GM13977 (cell line): ENCODE measurements at regions of chr3 and their contacts with region 1.

Region 1: GRCh38 chr3:179015551-179016020 is 56.0 kb downstream of the ZMAT3 start:
- DNase-seq: peak; percentile 54
- CTCF ChIP-seq: peak; percentile 62

Region 2: DNA sequence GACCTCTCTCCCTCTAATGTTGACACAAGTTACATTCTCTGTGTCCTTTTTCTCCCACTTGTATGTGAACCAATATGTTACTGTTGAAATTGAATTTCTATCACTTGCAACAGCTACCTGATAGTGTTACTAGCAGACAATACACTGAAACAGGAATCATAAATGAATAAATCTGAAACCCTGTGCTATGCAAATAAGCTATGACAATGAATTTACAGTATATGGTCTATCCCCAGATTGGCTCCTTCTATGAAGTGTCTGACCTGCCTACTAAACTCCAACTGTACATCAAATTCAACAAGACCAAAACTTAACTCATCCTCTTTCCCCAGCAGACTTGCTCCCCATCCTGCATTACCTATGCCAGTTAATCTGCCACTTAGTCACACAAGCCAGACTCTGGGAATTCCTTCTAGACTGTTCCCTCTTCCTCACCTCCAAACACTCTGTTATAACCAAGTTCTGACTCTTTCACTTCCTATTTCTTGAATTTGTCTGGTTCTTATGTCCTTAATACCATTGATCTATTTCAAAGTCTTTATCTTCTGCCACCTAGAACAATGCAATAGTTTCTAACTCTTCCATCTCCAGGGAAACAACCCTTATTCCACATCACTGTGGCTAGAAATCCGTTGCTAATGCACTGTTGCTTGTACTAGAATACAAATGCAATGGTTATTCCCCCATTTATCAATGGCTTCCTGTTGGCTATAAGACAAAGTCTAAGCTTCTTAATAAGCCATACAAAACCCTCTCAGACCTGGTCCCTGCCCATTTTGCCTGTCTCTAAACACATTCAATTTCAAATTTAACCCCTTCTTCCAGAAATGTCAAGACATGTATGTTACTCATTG is 293.9 kb after region 1 on chr3:
- in situ Hi-C with region 1: loop called (anchors 10 kb)
- DNase-seq: no peak
- CTCF ChIP-seq: no peak